ENCODE measurements at regions of chr3 and their contacts with region 1.

Region 1: DNA sequence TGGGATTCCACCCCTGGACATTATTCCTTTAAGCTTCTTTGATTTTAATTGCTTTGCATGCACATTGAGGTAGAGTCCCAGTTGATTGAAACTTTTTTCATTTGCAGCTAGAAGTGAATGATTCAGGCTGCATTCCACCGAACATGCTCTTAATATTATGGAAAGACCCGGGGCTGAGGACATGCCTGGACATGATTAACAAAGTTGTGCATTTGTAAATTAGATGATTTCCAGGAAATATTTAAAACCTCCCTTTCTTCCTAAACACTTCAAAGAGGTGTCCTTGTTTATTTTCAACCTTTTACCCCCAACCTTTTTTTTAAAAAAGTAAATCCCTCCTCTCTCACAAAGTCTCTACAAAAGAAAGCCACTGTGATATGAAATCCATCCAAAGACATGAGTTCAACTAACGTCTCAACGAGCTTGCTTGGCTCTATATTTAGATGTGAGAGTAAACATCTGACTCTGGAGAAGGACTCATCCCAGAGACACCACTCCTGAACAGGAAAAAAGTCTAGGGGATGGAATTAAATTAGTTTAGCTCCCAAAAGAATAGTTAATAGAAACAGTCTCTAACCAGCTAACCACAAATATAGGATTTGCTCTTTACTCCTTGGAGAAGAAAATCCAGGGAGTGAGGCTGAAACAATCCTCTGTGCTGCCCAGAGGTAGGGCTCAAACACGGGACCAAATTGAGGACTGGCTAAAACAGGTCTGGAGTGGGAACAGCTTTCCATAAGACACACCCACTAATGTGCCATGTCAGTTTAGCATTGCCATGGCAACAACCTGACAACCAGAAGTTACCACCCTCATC is 83.1 kb downstream of the XXYLT1 start:
- DNase-seq: peak; percentile 60
- H3K4me3 Mint-ChIP-seq: peak overlapping the region; percentile 35
- H3K27ac Mint-ChIP-seq: peak overlapping the region; percentile 98
- H3K4me1 Mint-ChIP-seq: peaks cover 34% of the 10 kb centered on the region
- H3K27me3 Mint-ChIP-seq: no peaks in the 10 kb centered on the region
- CTCF ChIP-seq: no peak

Region 2: DNA sequence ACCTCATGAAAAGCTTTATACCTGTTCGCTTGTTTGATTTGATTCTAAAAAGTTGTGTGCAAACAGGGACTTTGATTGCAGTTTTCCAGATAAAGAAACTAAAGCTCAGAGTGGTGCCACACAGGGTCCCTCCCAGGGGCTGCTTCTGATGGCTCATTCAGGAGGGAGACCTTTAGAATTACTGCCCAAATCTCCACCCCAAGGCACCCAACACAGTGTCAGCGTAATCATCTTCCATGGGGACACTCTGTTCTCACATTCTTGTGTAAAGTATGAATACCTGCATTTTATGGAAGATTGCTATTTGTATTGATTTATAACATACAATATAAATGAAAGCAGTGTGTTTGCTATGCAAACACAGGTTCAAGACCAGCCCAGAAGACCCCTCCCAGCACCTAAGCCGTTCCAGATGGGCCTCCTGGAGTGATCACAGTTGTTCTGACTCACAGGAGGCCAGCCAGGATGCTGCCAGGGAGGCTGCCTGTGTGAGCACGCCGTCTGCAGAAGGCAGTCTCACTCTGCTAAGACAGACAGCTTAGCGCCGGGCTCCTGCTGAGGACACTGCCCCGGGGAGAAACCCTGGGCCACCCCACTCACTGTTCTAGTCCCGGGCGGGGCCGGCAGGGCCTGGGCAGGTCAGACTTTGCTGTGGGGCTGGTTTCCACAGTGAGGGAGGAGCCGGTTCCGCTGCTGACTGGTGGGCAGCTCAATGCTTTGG is 316.5 kb before region 1 on chr3:
- CTCF ChIA-PET with region 1: no interaction called
- POLR2A ChIA-PET with region 1: interaction called, 17 read pairs
- intact Hi-C with region 1: no loop called
- DNase-seq: peak; percentile 93
- H3K4me3 Mint-ChIP-seq: peak overlapping the region; percentile 71
- H3K27ac Mint-ChIP-seq: peak overlapping the region; percentile 82
- H3K4me1 Mint-ChIP-seq: peaks cover 36% of the 10 kb centered on the region
- H3K27me3 Mint-ChIP-seq: no peaks in the 10 kb centered on the region
- CTCF ChIP-seq: no peak

Region 3: GRCh38 chr3:195139091-195139839 is 48.6 kb before region 1 on chr3:
- CTCF ChIA-PET with region 1: interaction called, 3 read pairs
- POLR2A ChIA-PET with region 1: interaction called, 22 read pairs
- intact Hi-C with region 1: no loop called
- DNase-seq: no peak
- H3K4me3 Mint-ChIP-seq: peak overlapping the region; percentile 47
- H3K27ac Mint-ChIP-seq: peak overlapping the region; percentile 64
- H3K4me1 Mint-ChIP-seq: peaks cover 18% of the 10 kb centered on the region
- H3K27me3 Mint-ChIP-seq: no peaks in the 10 kb centered on the region
- CTCF ChIP-seq: no peak

Region 4: DNA sequence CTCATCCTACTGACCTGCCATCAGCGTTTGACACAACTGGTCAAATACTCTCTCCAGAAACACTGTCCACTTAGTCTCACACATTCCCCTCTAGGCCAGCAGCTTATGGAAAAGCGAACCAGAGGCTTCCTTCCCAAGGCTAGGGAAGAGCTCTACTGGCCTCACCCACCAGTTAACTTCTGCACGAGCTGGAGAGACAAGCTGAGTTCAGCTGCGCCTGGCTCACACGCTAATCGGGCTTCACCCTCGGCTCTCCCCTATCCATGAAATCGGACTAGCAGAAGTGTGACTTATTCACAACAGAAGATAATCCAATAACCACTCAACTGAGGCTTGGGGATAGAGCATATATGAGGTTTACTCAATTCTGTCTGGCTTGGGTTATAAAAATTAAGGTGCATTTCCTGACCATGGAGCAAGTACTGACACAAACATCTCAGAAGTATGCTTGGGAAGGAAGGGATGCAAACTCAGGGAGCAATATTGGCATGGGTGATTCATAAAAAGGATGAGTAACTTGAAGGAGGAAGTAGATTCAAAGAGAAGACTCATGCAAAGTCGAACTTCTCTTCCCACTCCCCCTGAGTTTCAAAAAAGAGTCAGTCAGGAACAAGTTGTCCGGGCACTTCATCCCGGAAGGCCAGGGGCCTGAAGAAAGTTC is 10.1 kb after region 1 on chr3:
- CTCF ChIA-PET with region 1: interaction called, 3 read pairs
- POLR2A ChIA-PET with region 1: interaction called, 34 read pairs
- intact Hi-C with region 1: no loop called
- DNase-seq: peak; percentile 61
- H3K4me3 Mint-ChIP-seq: no peak overlapping the region
- H3K27ac Mint-ChIP-seq: peak overlapping the region; percentile 64
- H3K4me1 Mint-ChIP-seq: peaks cover 26% of the 10 kb centered on the region
- H3K27me3 Mint-ChIP-seq: no peaks in the 10 kb centered on the region
- CTCF ChIP-seq: no peak

Measured in MCF 10A (cell line).